ENCODE measurements at regions of chr3 and their contacts with region 1.

Region 1: DNA sequence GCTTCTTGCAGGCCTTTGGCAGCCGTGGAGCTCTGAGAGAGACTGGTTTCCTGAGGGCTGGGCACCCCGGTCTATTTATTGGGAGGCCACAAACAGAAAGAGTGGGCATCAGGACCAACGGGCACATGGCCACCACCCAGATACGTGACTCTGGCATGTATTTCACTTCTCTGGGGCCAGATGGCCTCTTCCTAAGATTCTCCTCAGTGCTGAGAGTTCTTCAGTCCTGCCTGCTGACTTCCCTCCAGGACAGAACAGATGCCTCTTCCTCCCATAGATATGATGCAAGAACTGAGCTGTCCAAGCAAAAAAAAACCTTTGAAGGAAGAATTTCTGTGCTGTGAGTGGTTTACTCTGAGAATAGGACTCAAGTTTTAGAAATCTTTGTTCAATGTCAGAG is 107.7 kb downstream of the IGF2BP2 start:
- DNase-seq: peak; percentile 62
- H3K4me3 ChIP-seq: no peak overlapping the region
- H3K27ac ChIP-seq: peak overlapping the region; percentile 90
- H3K4me1 ChIP-seq: peaks cover 59% of the 10 kb centered on the region
- H3K27me3 ChIP-seq: no peaks in the 10 kb centered on the region
- CTCF ChIP-seq: no peak

Region 2: GRCh38 chr3:185687271-185687878 is 29.7 kb before region 1 on chr3:
- CTCF ChIA-PET with region 1: no interaction called
- dilution Hi-C with region 1: no loop called
- in situ Hi-C with region 1: no loop called
- intact Hi-C with region 1: loop called (anchors 1 kb)
- DNase-seq: peak; percentile 48
- H3K4me3 ChIP-seq: no peak overlapping the region
- H3K27ac ChIP-seq: peak overlapping the region; percentile 90
- H3K4me1 ChIP-seq: peaks cover 23% of the 10 kb centered on the region
- H3K27me3 ChIP-seq: no peaks in the 10 kb centered on the region
- CTCF ChIP-seq: no peak

Region 3: GRCh38 chr3:185727873-185728272 is 10.8 kb after region 1 on chr3:
- CTCF ChIA-PET with region 1: no interaction called
- dilution Hi-C with region 1: no loop called
- in situ Hi-C with region 1: no loop called
- intact Hi-C with region 1: loop called (anchors 1 kb)
- DNase-seq: peak; percentile 94
- H3K4me3 ChIP-seq: no peak overlapping the region
- H3K27ac ChIP-seq: peak overlapping the region; percentile 98
- H3K4me1 ChIP-seq: peaks cover 67% of the 10 kb centered on the region
- H3K27me3 ChIP-seq: no peaks in the 10 kb centered on the region
- CTCF ChIP-seq: no peak